Vagina (tissue), 2 donors: ENCODE measurements at regions of chr20 and their contacts with region 1.

Region 1: GRCh38 chr20:22315771-22316170 is 268.6 kb downstream of the FOXA2 start:
- DNase-seq: no peak
- H3K4me3 ChIP-seq: no peak overlapping the region
- H3K27ac ChIP-seq: no peak overlapping the region
- H3K4me1 ChIP-seq: no peaks in the 10 kb centered on the region
- H3K27me3 ChIP-seq: no peaks in the 10 kb centered on the region
- CTCF ChIP-seq: no peak
- POLR2A ChIP-seq: no peak

Region 2: GRCh38 chr20:22285555-22285954 is 30.2 kb before region 1 on chr20:
- intact Hi-C with region 1: loop called (anchors 2 kb)
- DNase-seq: no peak
- H3K4me3 ChIP-seq: no peak overlapping the region
- H3K27ac ChIP-seq: no peak overlapping the region
- H3K4me1 ChIP-seq: peaks cover 7% of the 10 kb centered on the region
- H3K27me3 ChIP-seq: no peaks in the 10 kb centered on the region
- CTCF ChIP-seq: no peak
- POLR2A ChIP-seq: no peak

Region 3: GRCh38 chr20:22385602-22386305 is 70.0 kb after region 1 on chr20:
- intact Hi-C with region 1: no loop called
- DNase-seq: no peak
- H3K4me3 ChIP-seq: no peak overlapping the region
- H3K27ac ChIP-seq: no peak overlapping the region
- H3K4me1 ChIP-seq: no peaks in the 10 kb centered on the region
- H3K27me3 ChIP-seq: no peaks in the 10 kb centered on the region
- CTCF ChIP-seq: no peak
- POLR2A ChIP-seq: no peak